Naive thymus-derived CD4-positive, alpha-beta T cell (primary cell): ENCODE measurements at regions of chr20 and their contacts with region 1.

Region 1: GRCh38 chr20:46689082-46689754 is at the start of gene TP53RK:
- DNase-seq: peak; percentile 85 to 98 (median 96)
- ATAC-seq: peak; percentile 97
- H3K4me3 ChIP-seq: peak within 1 kb of the TSS; percentile 84
- H3K4me3 Mint-ChIP-seq: peak within 1 kb of the TSS; percentile 90 to 100 (median 96)
- H3K27ac ChIP-seq: peak within 1 kb of the TSS; percentile 90
- H3K27ac Mint-ChIP-seq: peak within 1 kb of the TSS; percentile 91 to 97 (median 95)
- H3K4me1 ChIP-seq: peaks cover 20 to 30% of the 10 kb centered on the region in 2 donors
- H3K4me1 Mint-ChIP-seq: peaks cover 38 to 54% (median 45%) of the 10 kb centered on the region in 7 donors
- H3K27me3 ChIP-seq: no peaks in the 10 kb centered on the region
- H3K27me3 Mint-ChIP-seq: no peaks in the 10 kb centered on the region
- total RNA-seq, gene TP53RK: 4.4 to 27.7 (median 17.7) TPM

Region 2: GRCh38 chr20:45792332-45792686 is 896.9 kb before region 1 on chr20:
- CTCF ChIA-PET with region 1: no interaction called
- POLR2A ChIA-PET with region 1: no interaction called
- intact Hi-C with region 1: loop called in 1 of 2 experiments (anchors 5 kb)
- DNase-seq: peak in 1 of 9 donors; percentile 9
- ATAC-seq: peak; percentile 39
- H3K4me3 ChIP-seq: peak overlapping the region; percentile 70
- H3K4me3 Mint-ChIP-seq: peak overlapping the region; percentile 85 to 99 (median 92)
- H3K27ac ChIP-seq: peak overlapping the region; percentile 96
- H3K27ac Mint-ChIP-seq: peak overlapping the region; percentile 87 to 99 (median 93)
- H3K4me1 ChIP-seq: peaks cover 5 to 10% of the 10 kb centered on the region in 2 donors
- H3K4me1 Mint-ChIP-seq: peaks cover 13 to 28% (median 20%) of the 10 kb centered on the region in 7 donors
- H3K27me3 ChIP-seq: no peaks in the 10 kb centered on the region
- H3K27me3 Mint-ChIP-seq: peaks cover 0 to 5% (median 0%) of the 10 kb centered on the region in 5 donors

Region 3: DNA sequence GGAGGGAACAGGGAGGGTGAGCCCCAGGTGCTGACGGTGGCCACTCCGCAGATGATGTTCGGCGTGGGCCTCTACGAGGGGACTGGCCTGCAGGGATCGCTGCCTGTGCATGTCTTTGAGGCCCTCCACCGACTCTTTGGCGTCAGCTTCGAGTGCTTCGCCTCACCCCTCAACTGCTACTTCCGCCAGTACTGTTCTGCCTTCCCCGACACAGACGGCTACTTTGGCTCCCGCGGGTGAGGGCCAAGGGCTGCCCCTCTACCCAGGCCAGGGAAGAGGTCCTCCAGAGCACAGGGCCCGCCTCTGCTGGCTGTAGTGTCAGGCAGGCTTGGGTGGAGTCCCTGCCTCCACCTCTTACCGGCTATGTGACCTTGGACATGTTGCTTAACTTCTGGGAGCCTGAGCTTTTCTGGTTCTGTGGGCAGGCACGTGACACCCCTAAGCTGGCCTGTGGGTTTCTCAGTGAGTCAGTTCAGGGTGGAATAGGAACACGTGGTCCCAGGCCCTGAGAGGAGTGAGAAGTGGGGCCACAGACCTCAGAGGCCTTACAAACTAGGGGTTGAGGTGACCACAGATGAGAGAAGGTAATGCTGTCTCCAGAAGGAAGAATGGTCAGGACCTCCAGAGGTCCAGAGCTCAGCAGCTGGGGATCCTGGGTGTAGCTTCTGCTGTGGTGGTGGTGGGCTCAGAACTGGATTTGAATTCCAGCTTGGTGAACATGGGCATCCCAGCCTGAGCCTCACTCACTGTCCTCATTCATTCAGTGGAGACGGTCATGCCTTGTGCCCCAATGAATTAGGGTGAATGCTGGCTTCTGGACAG is 742.9 kb before region 1 on chr20:
- CTCF ChIA-PET with region 1: no interaction called
- POLR2A ChIA-PET with region 1: no interaction called
- intact Hi-C with region 1: no loop called
- DNase-seq: no peak
- ATAC-seq: peak; percentile 72
- H3K4me3 ChIP-seq: no peak overlapping the region
- H3K4me3 Mint-ChIP-seq: peak overlapping the region in 1 of 10 donors; percentile 25
- H3K27ac ChIP-seq: no peak overlapping the region
- H3K27ac Mint-ChIP-seq: peak overlapping the region in 4 of 9 donors; percentile 7 to 62 (median 47)
- H3K4me1 ChIP-seq: no peaks in the 10 kb centered on the region
- H3K4me1 Mint-ChIP-seq: peaks cover 0 to 13% (median 0%) of the 10 kb centered on the region in 7 donors
- H3K27me3 ChIP-seq: no peaks in the 10 kb centered on the region
- H3K27me3 Mint-ChIP-seq: no peaks in the 10 kb centered on the region

Region 4: GRCh38 chr20:46307139-46307998 is 381.8 kb before region 1 on chr20:
- CTCF ChIA-PET with region 1: no interaction called
- POLR2A ChIA-PET with region 1: no interaction called
- intact Hi-C with region 1: loop called (anchors 2 to 5 kb)
- DNase-seq: peak; percentile 58 to 79 (median 74)
- ATAC-seq: peak; percentile 90
- H3K4me3 ChIP-seq: peak overlapping the region; percentile 43
- H3K4me3 Mint-ChIP-seq: peak overlapping the region; percentile 24 to 83 (median 73)
- H3K27ac ChIP-seq: no peak overlapping the region
- H3K27ac Mint-ChIP-seq: no peak overlapping the region
- H3K4me1 ChIP-seq: peaks cover 0 to 5% of the 10 kb centered on the region in 2 donors
- H3K4me1 Mint-ChIP-seq: peaks cover 4 to 28% (median 15%) of the 10 kb centered on the region in 7 donors
- H3K27me3 ChIP-seq: peaks cover 7 to 15% of the 10 kb centered on the region in 2 donors
- H3K27me3 Mint-ChIP-seq: peaks cover 60 to 76% (median 71%) of the 10 kb centered on the region in 5 donors

Region 5: DNA sequence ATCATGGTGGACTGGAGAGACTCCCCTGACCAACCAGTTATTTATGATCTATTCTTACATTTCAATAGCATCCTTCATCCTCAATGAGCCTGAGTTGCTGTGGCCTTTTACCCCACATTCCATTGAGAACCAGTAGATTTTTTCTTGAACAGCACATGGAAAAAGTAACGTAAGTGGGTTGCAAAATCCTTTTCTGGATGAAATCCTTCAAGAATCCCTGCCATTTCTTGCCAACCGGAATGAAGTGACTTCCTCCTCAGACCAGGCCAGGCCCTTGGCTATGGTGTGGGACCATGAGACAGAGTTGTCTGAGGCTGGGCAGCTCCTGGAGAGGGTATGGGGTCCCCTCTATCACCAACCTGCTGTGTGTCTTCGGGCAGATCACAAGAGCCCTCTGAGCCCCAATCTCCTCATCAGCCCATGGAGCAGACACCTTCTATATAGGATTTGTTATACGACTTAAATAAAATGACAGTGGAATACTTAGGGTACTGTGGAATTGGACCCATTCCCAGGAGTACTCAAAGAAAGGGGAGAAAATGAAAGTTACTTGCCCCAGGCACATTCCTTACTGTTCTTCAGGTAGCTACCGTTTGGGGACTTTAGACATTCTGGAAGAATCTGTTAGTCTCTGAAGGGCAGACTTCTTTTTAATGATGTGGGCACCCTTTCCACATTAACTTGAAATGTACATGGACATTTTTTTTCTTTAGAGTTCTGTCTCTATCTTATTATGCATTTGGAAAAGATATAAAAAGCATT is 216.3 kb after region 1 on chr20:
- CTCF ChIA-PET with region 1: no interaction called
- POLR2A ChIA-PET with region 1: no interaction called
- intact Hi-C with region 1: no loop called
- DNase-seq: no peak
- ATAC-seq: no peak
- H3K4me3 ChIP-seq: no peak overlapping the region
- H3K4me3 Mint-ChIP-seq: no peak overlapping the region
- H3K27ac ChIP-seq: no peak overlapping the region
- H3K27ac Mint-ChIP-seq: no peak overlapping the region
- H3K4me1 ChIP-seq: no peaks in the 10 kb centered on the region
- H3K4me1 Mint-ChIP-seq: no peaks in the 10 kb centered on the region
- H3K27me3 ChIP-seq: no peaks in the 10 kb centered on the region
- H3K27me3 Mint-ChIP-seq: peaks cover 0 to 29% (median 15%) of the 10 kb centered on the region in 5 donors

Region 6: DNA sequence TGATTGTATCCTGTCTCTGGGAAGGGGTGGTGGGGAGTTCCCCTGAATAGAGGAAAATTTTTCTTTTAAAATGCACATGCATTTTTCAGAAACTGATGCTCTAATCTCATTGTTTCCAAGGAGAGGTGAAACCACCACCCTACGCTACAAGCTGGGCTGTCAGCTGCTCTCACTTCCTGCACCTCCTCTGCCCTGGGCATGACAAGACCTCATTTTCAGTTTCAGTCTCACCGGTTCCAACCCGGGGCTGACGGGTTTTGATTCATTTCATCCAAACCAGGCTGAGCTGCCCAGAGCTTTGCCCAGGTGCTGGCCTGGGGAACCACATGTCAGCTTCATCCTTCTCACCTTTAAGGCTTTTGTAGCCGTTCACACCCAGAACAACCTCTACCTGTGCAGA is 305.1 kb after region 1 on chr20:
- CTCF ChIA-PET with region 1: no interaction called
- POLR2A ChIA-PET with region 1: no interaction called
- intact Hi-C with region 1: loop called in 1 of 2 experiments (anchors 10 kb)
- DNase-seq: peak in 2 of 9 donors; percentile 9 to 73
- ATAC-seq: peak; percentile 54
- H3K4me3 ChIP-seq: peak overlapping the region; percentile 39
- H3K4me3 Mint-ChIP-seq: peak overlapping the region in 9 of 10 donors; percentile 48 to 83 (median 52)
- H3K27ac ChIP-seq: no peak overlapping the region
- H3K27ac Mint-ChIP-seq: peak overlapping the region in 1 of 9 donors; percentile 93
- H3K4me1 ChIP-seq: no peaks in the 10 kb centered on the region
- H3K4me1 Mint-ChIP-seq: peaks cover 0 to 74% (median 8%) of the 10 kb centered on the region in 7 donors
- H3K27me3 ChIP-seq: no peaks in the 10 kb centered on the region
- H3K27me3 Mint-ChIP-seq: peaks cover 9 to 40% (median 31%) of the 10 kb centered on the region in 5 donors

Region 7: GRCh38 chr20:47508278-47508677 is 819.1 kb after region 1 on chr20:
- CTCF ChIA-PET with region 1: no interaction called
- POLR2A ChIA-PET with region 1: no interaction called
- intact Hi-C with region 1: loop called in 1 of 2 experiments (anchors 5 kb)
- DNase-seq: peak in 2 of 9 donors; percentile 11 to 28
- ATAC-seq: peak; percentile 46
- H3K4me3 ChIP-seq: no peak overlapping the region
- H3K4me3 Mint-ChIP-seq: peak overlapping the region in 9 of 10 donors; percentile 38 to 82 (median 64)
- H3K27ac ChIP-seq: peak overlapping the region; percentile 20
- H3K27ac Mint-ChIP-seq: peak overlapping the region; percentile 27 to 88 (median 71)
- H3K4me1 ChIP-seq: peaks cover 31 to 33% of the 10 kb centered on the region in 2 donors
- H3K4me1 Mint-ChIP-seq: peaks cover 60 to 90% (median 80%) of the 10 kb centered on the region in 7 donors
- H3K27me3 ChIP-seq: no peaks in the 10 kb centered on the region
- H3K27me3 Mint-ChIP-seq: no peaks in the 10 kb centered on the region